IMR-90 (cell line): ENCODE measurements at regions of chr12 and their contacts with region 1.

Region 1: GRCh38 chr12:69662764-69663163 is 36.3 kb downstream of the BEST3 start:
- DNase-seq: no peak
- ATAC-seq: no peak
- H3K4me3 ChIP-seq: no peak overlapping the region
- H3K27ac ChIP-seq: no peak overlapping the region
- H3K4me1 ChIP-seq: peaks cover 2% of the 10 kb centered on the region; the same call in 1 of the 2 replicates
- H3K27me3 ChIP-seq: no peaks in the 10 kb centered on the region; the same call in 1 of the 2 replicates
- CTCF ChIP-seq: no peak
- POLR2A ChIP-seq: no peak
- RAD21 ChIP-seq: no peak

Region 2: GRCh38 chr12:69610126-69610525 is 52.6 kb before region 1 on chr12:
- CTCF ChIA-PET with region 1: no interaction called
- POLR2A ChIA-PET with region 1: no interaction called
- dilution Hi-C with region 1: no loop called
- in situ Hi-C with region 1: no loop called
- intact Hi-C with region 1: loop called (anchors 5 kb)
- DNase-seq: no peak
- ATAC-seq: no peak
- H3K4me3 ChIP-seq: no peak overlapping the region
- H3K27ac ChIP-seq: no peak overlapping the region
- H3K4me1 ChIP-seq: no peaks in the 10 kb centered on the region
- H3K27me3 ChIP-seq: peaks cover 3% of the 10 kb centered on the region
- CTCF ChIP-seq: no peak
- POLR2A ChIP-seq: no peak
- RAD21 ChIP-seq: no peak

Region 3: DNA sequence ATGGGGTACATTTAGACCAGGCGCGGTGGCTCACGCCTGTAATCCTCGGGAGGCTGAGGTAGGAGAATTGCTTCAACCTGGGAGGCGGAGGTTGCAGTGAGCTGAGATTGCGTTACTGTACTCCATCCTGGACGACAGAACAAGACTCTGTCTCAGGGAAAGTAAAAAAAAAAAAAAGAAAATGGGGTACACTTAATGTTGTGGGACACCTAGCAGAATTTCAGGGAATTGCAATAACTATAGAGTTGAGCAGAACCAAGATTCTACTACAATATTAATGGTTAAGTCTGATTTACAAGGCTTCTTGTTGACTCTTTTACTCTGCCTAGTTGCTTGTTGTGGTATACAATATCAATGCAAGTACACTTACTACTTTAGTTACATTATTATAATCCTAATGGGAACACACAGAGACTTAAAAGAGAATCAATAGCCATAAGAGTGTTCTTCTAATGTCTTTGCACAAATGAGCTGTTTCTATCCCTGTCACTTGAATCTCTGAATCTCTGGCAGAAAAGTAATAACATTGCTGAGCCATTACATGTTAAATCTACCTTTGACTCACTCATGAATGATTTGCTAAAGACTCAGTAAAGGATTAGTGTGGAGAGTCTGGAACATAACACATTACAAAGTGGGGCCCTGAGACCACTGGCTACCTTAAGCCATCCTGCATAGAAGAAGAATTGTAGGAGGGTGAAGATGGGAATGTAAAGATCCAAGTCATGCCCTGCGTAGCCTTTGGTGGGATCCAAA is 13.7 kb after region 1 on chr12:
- CTCF ChIA-PET with region 1: interaction called, 7 read pairs
- POLR2A ChIA-PET with region 1: no interaction called
- dilution Hi-C with region 1: no loop called
- in situ Hi-C with region 1: no loop called
- intact Hi-C with region 1: loop called (anchors 1 kb)
- DNase-seq: peak; percentile 18
- ATAC-seq: no peak; the same call in 1 of the 2 replicates
- H3K4me3 ChIP-seq: no peak overlapping the region
- H3K27ac ChIP-seq: no peak overlapping the region
- H3K4me1 ChIP-seq: no peaks in the 10 kb centered on the region
- H3K27me3 ChIP-seq: no peaks in the 10 kb centered on the region
- CTCF ChIP-seq: peak; percentile 21; the same call in 1 of the 2 replicates
- POLR2A ChIP-seq: no peak
- RAD21 ChIP-seq: no peak